CD4-positive, alpha-beta memory T cell (primary cell): ENCODE measurements at regions of chr13 and their contacts with region 1.

Region 1: DNA sequence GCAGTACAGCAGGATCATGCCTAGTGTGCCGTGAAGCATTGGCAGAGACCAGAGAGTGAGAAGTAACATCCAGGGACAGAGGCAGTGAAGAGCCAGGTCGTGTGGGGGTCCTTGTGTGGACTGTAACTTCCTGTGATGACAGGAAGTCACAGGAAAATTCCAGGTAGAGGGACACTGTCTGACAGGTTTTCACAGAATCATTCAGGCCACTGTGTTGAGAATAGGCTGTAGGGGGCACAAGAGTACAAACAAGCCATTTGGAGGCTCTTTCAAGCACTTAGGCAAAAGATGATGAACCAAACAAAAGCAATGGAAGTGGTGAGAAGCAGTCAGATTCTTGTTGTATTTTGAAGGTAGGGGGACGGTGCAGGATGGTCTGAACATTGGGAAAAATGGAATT is 46.4 kb downstream of the N4BP2L1 start:
- DNase-seq: peak; percentile 14 to 38 (median 21)
- H3K4me3 ChIP-seq: no peak overlapping the region
- H3K4me3 Mint-ChIP-seq: no peak overlapping the region
- H3K27ac ChIP-seq: no peak overlapping the region
- H3K27ac Mint-ChIP-seq: no peak overlapping the region
- H3K4me1 ChIP-seq: no peaks in the 10 kb centered on the region
- H3K4me1 Mint-ChIP-seq: no peaks in the 10 kb centered on the region
- H3K27me3 ChIP-seq: no peaks in the 10 kb centered on the region
- H3K27me3 Mint-ChIP-seq: no peaks in the 10 kb centered on the region

Region 2: GRCh38 chr13:31044377-31045285 is 1336.9 kb before region 1 on chr13:
- CTCF ChIA-PET with region 1: no interaction called
- POLR2A ChIA-PET with region 1: no interaction called
- intact Hi-C with region 1: no loop called
- DNase-seq: peak; percentile 75 to 79 (median 78)
- H3K4me3 ChIP-seq: no peak overlapping the region
- H3K4me3 Mint-ChIP-seq: peak overlapping the region in 6 of 8 donors; percentile 18 to 71 (median 64)
- H3K27ac ChIP-seq: peak overlapping the region; percentile 39
- H3K27ac Mint-ChIP-seq: peak overlapping the region; percentile 14 to 89 (median 81)
- H3K4me1 ChIP-seq: peaks cover 35% of the 10 kb centered on the region
- H3K4me1 Mint-ChIP-seq: peaks cover 17 to 34% (median 20%) of the 10 kb centered on the region in 4 donors
- H3K27me3 ChIP-seq: no peaks in the 10 kb centered on the region
- H3K27me3 Mint-ChIP-seq: peaks cover 1 to 2% of the 10 kb centered on the region in 2 donors

Region 3: DNA sequence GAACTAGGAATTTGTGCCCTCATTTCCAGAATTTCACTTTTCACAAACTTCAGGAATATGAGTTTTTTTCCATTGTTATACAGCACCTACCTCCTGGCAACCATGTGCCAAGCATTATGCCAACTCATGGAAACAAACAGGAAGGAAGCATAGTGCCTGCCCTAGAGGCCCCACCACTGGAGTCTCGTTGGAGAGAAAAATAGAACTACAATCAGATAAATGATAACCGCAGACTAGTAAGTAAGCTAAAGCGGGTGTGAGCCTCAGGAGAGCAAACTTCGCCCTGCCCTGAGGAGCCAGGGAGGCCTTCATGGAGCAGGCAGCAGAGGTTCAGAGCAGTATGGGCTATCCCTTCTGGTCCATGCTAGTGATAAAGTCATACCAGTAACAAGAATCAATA is 274.1 kb before region 1 on chr13:
- CTCF ChIA-PET with region 1: no interaction called
- POLR2A ChIA-PET with region 1: no interaction called
- intact Hi-C with region 1: no loop called
- DNase-seq: peak in 1 of 5 donors; percentile 2
- H3K4me3 ChIP-seq: no peak overlapping the region
- H3K4me3 Mint-ChIP-seq: no peak overlapping the region
- H3K27ac ChIP-seq: no peak overlapping the region
- H3K27ac Mint-ChIP-seq: no peak overlapping the region
- H3K4me1 ChIP-seq: no peaks in the 10 kb centered on the region
- H3K4me1 Mint-ChIP-seq: no peaks in the 10 kb centered on the region
- H3K27me3 ChIP-seq: no peaks in the 10 kb centered on the region
- H3K27me3 Mint-ChIP-seq: peaks cover 0 to 1% of the 10 kb centered on the region in 2 donors

Region 4: GRCh38 chr13:32354040-32354439 is 27.5 kb before region 1 on chr13:
- CTCF ChIA-PET with region 1: no interaction called
- POLR2A ChIA-PET with region 1: no interaction called
- intact Hi-C with region 1: no loop called
- DNase-seq: no peak
- H3K4me3 ChIP-seq: no peak overlapping the region
- H3K4me3 Mint-ChIP-seq: no peak overlapping the region
- H3K27ac ChIP-seq: no peak overlapping the region
- H3K27ac Mint-ChIP-seq: no peak overlapping the region
- H3K4me1 ChIP-seq: no peaks in the 10 kb centered on the region
- H3K4me1 Mint-ChIP-seq: no peaks in the 10 kb centered on the region
- H3K27me3 ChIP-seq: no peaks in the 10 kb centered on the region
- H3K27me3 Mint-ChIP-seq: no peaks in the 10 kb centered on the region

Region 5: GRCh38 chr13:32436028-32436427 is 54.5 kb after region 1 on chr13:
- CTCF ChIA-PET with region 1: no interaction called
- POLR2A ChIA-PET with region 1: no interaction called
- intact Hi-C with region 1: no loop called
- DNase-seq: no peak
- H3K4me3 ChIP-seq: no peak overlapping the region
- H3K4me3 Mint-ChIP-seq: no peak overlapping the region
- H3K27ac ChIP-seq: no peak overlapping the region
- H3K27ac Mint-ChIP-seq: no peak overlapping the region
- H3K4me1 ChIP-seq: no peaks in the 10 kb centered on the region
- H3K4me1 Mint-ChIP-seq: peaks cover 0 to 4% (median 1%) of the 10 kb centered on the region in 4 donors
- H3K27me3 ChIP-seq: no peaks in the 10 kb centered on the region
- H3K27me3 Mint-ChIP-seq: no peaks in the 10 kb centered on the region

Region 6: GRCh38 chr13:32581177-32581786 is 199.7 kb after region 1 on chr13:
- CTCF ChIA-PET with region 1: interaction called, 23 read pairs
- POLR2A ChIA-PET with region 1: no interaction called
- intact Hi-C with region 1: no loop called
- DNase-seq: peak in 3 of 5 donors; percentile 19 to 33 (median 28)
- H3K4me3 ChIP-seq: no peak overlapping the region
- H3K4me3 Mint-ChIP-seq: no peak overlapping the region
- H3K27ac ChIP-seq: no peak overlapping the region
- H3K27ac Mint-ChIP-seq: no peak overlapping the region
- H3K4me1 ChIP-seq: peaks cover 8% of the 10 kb centered on the region
- H3K4me1 Mint-ChIP-seq: peaks cover 1 to 10% (median 7%) of the 10 kb centered on the region in 4 donors
- H3K27me3 ChIP-seq: no peaks in the 10 kb centered on the region
- H3K27me3 Mint-ChIP-seq: no peaks in the 10 kb centered on the region

Region 7: DNA sequence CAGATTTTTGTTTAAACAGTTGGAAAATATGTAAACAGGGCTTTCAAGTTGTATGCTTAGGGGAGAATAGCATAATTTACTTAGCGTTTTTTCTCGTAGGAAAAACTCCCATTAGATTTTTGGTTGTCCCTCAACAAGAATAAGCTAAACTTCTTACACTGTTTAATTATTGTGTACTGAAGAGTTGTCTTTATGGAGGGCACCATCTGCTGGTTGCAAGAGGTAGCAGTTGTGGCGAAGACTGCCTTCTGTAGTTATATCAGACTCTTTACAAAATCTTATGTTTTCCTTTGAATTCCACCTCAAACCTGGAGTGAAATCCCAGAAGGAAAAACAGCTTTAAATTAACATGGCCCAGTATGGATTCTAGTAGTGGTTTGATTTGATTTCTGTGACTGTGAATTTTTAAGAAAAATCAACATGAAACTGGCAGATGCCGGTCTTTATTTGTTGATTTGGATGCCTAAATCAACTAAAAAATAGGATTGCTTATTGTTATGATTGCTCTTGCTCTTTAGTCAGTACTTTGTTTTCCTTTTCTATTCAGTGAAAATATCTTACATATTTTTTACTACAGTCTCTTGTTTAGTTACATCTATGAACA is 258.1 kb after region 1 on chr13:
- CTCF ChIA-PET with region 1: interaction called, 4 read pairs
- POLR2A ChIA-PET with region 1: no interaction called
- intact Hi-C with region 1: loop called (anchors 1 kb)
- DNase-seq: peak; percentile 46 to 59 (median 56)
- H3K4me3 ChIP-seq: no peak overlapping the region
- H3K4me3 Mint-ChIP-seq: no peak overlapping the region
- H3K27ac ChIP-seq: no peak overlapping the region
- H3K27ac Mint-ChIP-seq: no peak overlapping the region
- H3K4me1 ChIP-seq: peaks cover 7% of the 10 kb centered on the region
- H3K4me1 Mint-ChIP-seq: peaks cover 19 to 33% (median 28%) of the 10 kb centered on the region in 4 donors
- H3K27me3 ChIP-seq: no peaks in the 10 kb centered on the region
- H3K27me3 Mint-ChIP-seq: no peaks in the 10 kb centered on the region